ENCODE measurements at regions of chr17 and their contacts with region 1.

Region 1: GRCh38 chr17:8209909-8210760 is at the start of gene AURKB:
- DNase-seq: peak; percentile 90 to 92
- H3K4me3 ChIP-seq: peak within 1 kb of the TSS; percentile 84
- H3K4me3 Mint-ChIP-seq: peak within 1 kb of the TSS; percentile 100
- H3K27ac Mint-ChIP-seq: peak within 1 kb of the TSS; percentile 99
- H3K4me1 ChIP-seq: peaks cover 4% of the 10 kb centered on the region; the same call in 1 of the 2 replicates
- H3K4me1 Mint-ChIP-seq: peaks cover 8% of the 10 kb centered on the region
- H3K27me3 ChIP-seq: no peaks in the 10 kb centered on the region
- H3K27me3 Mint-ChIP-seq: no peaks in the 10 kb centered on the region
- CTCF ChIP-seq: no peak
- total RNA-seq, gene AURKB: 82.8 and 89.4 TPM in 2 replicates

Region 2: GRCh38 chr17:8173056-8173870 is 36.9 kb before region 1 on chr17:
- CTCF ChIA-PET with region 1: no interaction called
- POLR2A ChIA-PET with region 1: interaction called, 15 read pairs
- intact Hi-C with region 1: no loop called
- DNase-seq: peak; percentile 83 to 84
- H3K4me3 ChIP-seq: peak overlapping the region; percentile 34
- H3K4me3 Mint-ChIP-seq: peak overlapping the region; percentile 89
- H3K27ac Mint-ChIP-seq: peak overlapping the region; percentile 100
- H3K4me1 ChIP-seq: no peaks in the 10 kb centered on the region
- H3K4me1 Mint-ChIP-seq: peaks cover 7% of the 10 kb centered on the region
- H3K27me3 ChIP-seq: no peaks in the 10 kb centered on the region
- H3K27me3 Mint-ChIP-seq: no peaks in the 10 kb centered on the region
- CTCF ChIP-seq: no peak

Measured in Caco-2 (cell line).